CD4-positive, alpha-beta memory T cell (primary cell): ENCODE measurements at regions of chr7 and their contacts with region 1.

Region 1: GRCh38 chr7:87628780-87629569 is 777 bp downstream of the RUNDC3B start:
- DNase-seq: peak; percentile 17 to 51 (median 28)
- H3K4me3 ChIP-seq: peak overlapping the region in 1 of 2 donors; percentile 73
- H3K4me3 Mint-ChIP-seq: peak overlapping the region; percentile 75 to 93 (median 83)
- H3K27ac ChIP-seq: no peak overlapping the region
- H3K27ac Mint-ChIP-seq: peak overlapping the region in 4 of 7 donors; percentile 7 to 90 (median 41)
- H3K4me1 ChIP-seq: peaks cover 14% of the 10 kb centered on the region
- H3K4me1 Mint-ChIP-seq: peaks cover 7 to 16% (median 12%) of the 10 kb centered on the region in 4 donors
- H3K27me3 ChIP-seq: no peaks in the 10 kb centered on the region
- H3K27me3 Mint-ChIP-seq: peaks cover 6% of the 10 kb centered on the region in 2 donors

Region 2: GRCh38 chr7:87600130-87601124 is 28.5 kb before region 1 on chr7 and contains the start of gene ABCB1:
- CTCF ChIA-PET with region 1: no interaction called
- POLR2A ChIA-PET with region 1: interaction called, 8 read pairs
- intact Hi-C with region 1: loop called (anchors 1 kb)
- DNase-seq: peak; percentile 39 to 58 (median 44)
- H3K4me3 ChIP-seq: peak within 1 kb of the TSS; percentile 43 to 82
- H3K4me3 Mint-ChIP-seq: peak within 1 kb of the TSS; percentile 81 to 92 (median 84)
- H3K27ac ChIP-seq: peak within 1 kb of the TSS; percentile 56
- H3K27ac Mint-ChIP-seq: peak within 1 kb of the TSS; percentile 38 to 91 (median 82)
- H3K4me1 ChIP-seq: peaks cover 18% of the 10 kb centered on the region
- H3K4me1 Mint-ChIP-seq: peaks cover 8 to 34% (median 24%) of the 10 kb centered on the region in 4 donors
- H3K27me3 ChIP-seq: peaks cover 3% of the 10 kb centered on the region
- H3K27me3 Mint-ChIP-seq: peaks cover 23% of the 10 kb centered on the region in 2 donors
- total RNA-seq, gene ABCB1: 24.8 to 27.1 TPM

Region 3: DNA sequence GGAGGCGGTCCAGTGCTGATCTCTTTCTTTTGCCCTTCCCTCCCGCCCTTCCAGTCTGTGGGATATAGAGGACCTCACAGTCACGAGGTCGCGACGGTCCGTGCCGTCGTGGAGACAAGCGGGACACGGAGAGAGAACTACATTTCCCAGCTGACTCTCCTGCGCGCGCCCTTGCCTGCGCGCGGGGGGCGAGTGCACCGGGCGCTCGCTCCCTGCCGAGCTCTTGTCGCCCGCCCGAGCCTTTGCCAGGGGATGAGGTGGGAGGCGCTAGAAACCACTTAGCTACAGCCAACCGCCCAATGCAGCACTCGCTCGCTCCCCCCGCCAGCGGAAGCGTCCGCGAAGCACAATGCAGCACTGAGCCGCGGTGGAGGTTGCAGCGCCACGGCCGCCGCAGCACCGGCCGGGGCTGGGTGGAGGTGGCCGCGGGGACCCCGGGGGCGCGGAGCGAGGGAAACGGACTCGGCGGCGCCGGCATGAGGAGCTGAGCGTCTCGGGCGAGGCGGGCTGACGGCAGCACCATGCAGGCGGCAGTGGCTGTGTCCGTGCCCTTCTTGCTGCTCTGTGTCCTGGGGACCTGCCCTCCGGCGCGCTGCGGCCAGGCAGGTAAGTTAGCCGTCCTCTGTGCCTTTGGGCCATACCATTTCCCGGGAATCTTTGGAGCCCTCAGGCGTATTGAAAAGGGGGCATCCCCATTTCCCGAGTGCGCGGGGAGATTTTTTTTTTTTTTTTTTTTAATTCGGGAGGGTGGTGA is 305.1 kb after region 1 on chr7 and contains the start of gene ADAM22:
- CTCF ChIA-PET with region 1: no interaction called
- POLR2A ChIA-PET with region 1: no interaction called
- intact Hi-C with region 1: loop called (anchors 5 kb)
- DNase-seq: peak; percentile 80 to 84 (median 81)
- H3K4me3 ChIP-seq: peak within 1 kb of the TSS; percentile 52 to 64
- H3K4me3 Mint-ChIP-seq: peak within 1 kb of the TSS; percentile 88 to 93 (median 92)
- H3K27ac ChIP-seq: peak within 1 kb of the TSS; percentile 15
- H3K27ac Mint-ChIP-seq: peak within 1 kb of the TSS; percentile 55 to 85 (median 74)
- H3K4me1 ChIP-seq: peaks cover 13% of the 10 kb centered on the region
- H3K4me1 Mint-ChIP-seq: peaks cover 10 to 20% (median 12%) of the 10 kb centered on the region in 4 donors
- H3K27me3 ChIP-seq: no peaks in the 10 kb centered on the region
- H3K27me3 Mint-ChIP-seq: no peaks in the 10 kb centered on the region
- total RNA-seq, gene ADAM22: 5.2 to 7.7 TPM

Region 4: GRCh38 chr7:88057655-88058054 is 428.7 kb after region 1 on chr7:
- CTCF ChIA-PET with region 1: no interaction called
- POLR2A ChIA-PET with region 1: no interaction called
- intact Hi-C with region 1: no loop called
- DNase-seq: no peak
- H3K4me3 ChIP-seq: no peak overlapping the region
- H3K4me3 Mint-ChIP-seq: no peak overlapping the region
- H3K27ac ChIP-seq: no peak overlapping the region
- H3K27ac Mint-ChIP-seq: no peak overlapping the region
- H3K4me1 ChIP-seq: no peaks in the 10 kb centered on the region
- H3K4me1 Mint-ChIP-seq: no peaks in the 10 kb centered on the region
- H3K27me3 ChIP-seq: no peaks in the 10 kb centered on the region
- H3K27me3 Mint-ChIP-seq: no peaks in the 10 kb centered on the region